ENCODE measurements at regions of chr1 and their contacts with region 1.

Region 1: DNA sequence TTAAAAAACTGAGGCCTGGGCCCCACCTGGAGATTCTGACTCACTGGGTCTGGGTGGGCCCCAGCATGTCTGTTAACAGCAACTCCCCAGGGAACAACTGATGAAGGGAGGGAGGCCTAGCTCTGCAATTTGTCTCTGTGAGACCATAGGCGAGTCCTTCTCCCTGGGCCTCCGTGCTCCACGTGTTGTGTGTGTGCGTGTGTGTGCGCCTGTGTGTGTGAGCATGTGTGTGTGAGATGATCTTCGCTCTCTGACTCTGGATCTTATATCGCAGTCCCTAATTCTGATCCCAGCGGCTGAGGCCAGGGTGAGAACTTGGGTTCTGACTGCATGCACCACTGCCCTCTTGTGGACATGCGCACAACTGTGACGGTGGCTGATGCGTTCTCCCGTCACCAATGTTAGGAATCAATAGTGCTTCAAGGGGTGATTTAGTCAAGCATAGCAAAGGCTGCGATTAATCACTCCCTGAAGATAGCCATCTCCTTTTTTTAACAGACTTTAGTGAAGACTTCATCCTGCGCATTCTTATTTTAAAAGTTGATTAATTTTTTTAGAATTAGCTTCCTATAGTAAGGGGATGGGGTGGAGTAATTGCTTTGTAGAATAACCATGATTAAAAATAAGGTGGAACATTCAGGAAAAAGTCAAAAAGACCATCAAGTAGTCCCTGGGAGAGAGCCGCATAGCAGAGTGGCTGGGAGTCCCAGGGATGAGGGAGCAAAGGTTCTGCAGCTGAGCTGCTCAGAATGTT is 62.4 kb upstream of the USP24 start:
- DNase-seq: peak; percentile 77
- H3K4me3 ChIP-seq: no peak overlapping the region; a peak in 1 of 4 replicates
- H3K27ac ChIP-seq: no peak overlapping the region
- H3K4me1 ChIP-seq: peaks cover 3 to 10% of the 10 kb centered on the region in 2 experiments; a peak in 2 of 4 replicates
- H3K27me3 ChIP-seq: no peaks in the 10 kb centered on the region
- CTCF ChIP-seq: peak; percentile 90
- EP300 ChIP-seq: no peak
- RAD21 ChIP-seq: peak; percentile 95

Region 2: GRCh38 chr1:55071477-55071876 is 206.1 kb before region 1 on chr1:
- CTCF ChIA-PET with region 1: interaction called, 12 read pairs
- POLR2A ChIA-PET with region 1: no interaction called
- DNase-seq: peak; percentile 53
- H3K4me3 ChIP-seq: no peak overlapping the region
- H3K27ac ChIP-seq: no peak overlapping the region; a peak in 1 of 4 replicates
- H3K4me1 ChIP-seq: peaks cover 0 to 8% of the 10 kb centered on the region in 2 experiments; a peak in 1 of 4 replicates
- H3K27me3 ChIP-seq: no peaks in the 10 kb centered on the region
- CTCF ChIP-seq: peak; percentile 61
- EP300 ChIP-seq: no peak
- RAD21 ChIP-seq: peak; percentile 54

Region 3: DNA sequence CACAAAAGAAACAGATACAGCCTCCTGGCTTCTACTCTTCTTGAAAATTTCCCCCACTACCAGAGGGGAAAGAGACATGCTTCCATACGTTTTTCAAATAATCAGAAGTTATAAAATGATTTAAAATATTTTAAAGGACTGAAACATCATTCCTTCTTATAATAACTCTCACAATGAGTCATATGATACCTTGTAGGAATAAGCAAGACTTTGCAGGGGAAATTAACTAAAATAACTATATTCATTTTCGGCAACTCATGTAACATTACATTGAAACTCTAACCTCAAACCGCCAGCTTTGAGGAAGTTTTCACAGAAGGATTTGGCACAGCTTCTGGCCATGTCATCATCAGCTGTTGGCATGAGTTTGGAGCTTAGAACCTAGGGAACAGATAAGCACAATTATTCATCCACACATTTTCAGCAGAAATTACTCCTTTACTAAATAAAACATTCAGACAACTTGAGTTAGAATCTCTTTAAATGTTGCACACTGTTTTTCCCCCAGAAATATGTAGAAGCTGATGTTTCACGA is 148.3 kb before region 1 on chr1:
- CTCF ChIA-PET with region 1: interaction called, 151 read pairs
- POLR2A ChIA-PET with region 1: no interaction called
- DNase-seq: no peak
- H3K4me3 ChIP-seq: no peak overlapping the region
- H3K27ac ChIP-seq: no peak overlapping the region
- H3K4me1 ChIP-seq: no peaks in the 10 kb centered on the region
- H3K27me3 ChIP-seq: no peaks in the 10 kb centered on the region
- CTCF ChIP-seq: no peak
- EP300 ChIP-seq: no peak
- RAD21 ChIP-seq: no peak

Region 4: GRCh38 chr1:55140546-55140983 is 137.0 kb before region 1 on chr1:
- CTCF ChIA-PET with region 1: interaction called, 151 read pairs
- POLR2A ChIA-PET with region 1: no interaction called
- DNase-seq: peak; percentile 55
- H3K4me3 ChIP-seq: peak overlapping the region in 1 of 2 experiments; percentile 14; a peak in 1 of 4 replicates
- H3K27ac ChIP-seq: peak overlapping the region in 1 of 2 experiments; percentile 72; a peak in 2 of 4 replicates
- H3K4me1 ChIP-seq: peaks cover 0 to 3% of the 10 kb centered on the region in 2 experiments; a peak in 1 of 4 replicates
- H3K27me3 ChIP-seq: no peaks in the 10 kb centered on the region
- CTCF ChIP-seq: peak; percentile 89
- EP300 ChIP-seq: no peak
- RAD21 ChIP-seq: peak; percentile 90

Region 5: DNA sequence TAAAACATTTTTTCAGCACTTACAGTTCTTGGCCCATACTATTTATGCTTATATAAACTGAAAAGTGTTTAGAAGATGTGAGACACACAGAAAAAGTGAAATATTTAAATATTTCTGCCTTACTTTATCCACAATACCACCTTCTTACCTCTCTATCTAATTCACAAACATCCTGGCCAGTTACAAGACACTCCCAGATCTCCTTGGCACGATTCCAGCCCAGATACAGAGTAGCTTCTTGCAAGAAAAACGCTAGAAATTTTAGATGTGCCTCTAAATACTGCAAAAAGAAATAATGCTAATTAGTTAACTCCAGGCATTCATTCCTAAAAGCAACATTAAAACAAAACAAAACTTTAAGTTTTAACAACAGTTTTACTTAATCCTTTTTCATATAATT is 130.8 kb before region 1 on chr1:
- CTCF ChIA-PET with region 1: interaction called, 151 read pairs
- POLR2A ChIA-PET with region 1: no interaction called
- DNase-seq: no peak
- H3K4me3 ChIP-seq: no peak overlapping the region
- H3K27ac ChIP-seq: no peak overlapping the region
- H3K4me1 ChIP-seq: no peaks in the 10 kb centered on the region
- H3K27me3 ChIP-seq: no peaks in the 10 kb centered on the region
- CTCF ChIP-seq: no peak
- EP300 ChIP-seq: no peak
- RAD21 ChIP-seq: no peak

Region 6: DNA sequence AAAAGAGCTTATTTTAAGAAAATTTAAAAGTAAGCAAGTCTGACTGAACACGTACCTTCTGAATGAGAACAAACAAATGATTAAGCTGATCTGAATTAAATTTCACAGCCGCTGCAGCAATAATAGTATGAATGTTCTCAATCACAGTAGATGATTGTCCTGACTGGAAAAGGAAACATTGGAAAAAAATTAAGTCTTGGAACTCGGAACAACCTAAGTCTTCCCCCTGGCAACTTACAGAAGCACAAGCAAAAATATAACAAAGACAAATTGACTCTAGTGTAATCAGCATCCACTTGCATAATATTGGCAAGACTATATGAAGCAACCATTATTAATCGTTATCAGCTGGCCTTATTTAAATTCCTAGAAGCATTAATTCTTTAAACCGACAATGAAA is 122.9 kb before region 1 on chr1:
- CTCF ChIA-PET with region 1: interaction called, 22 read pairs
- POLR2A ChIA-PET with region 1: no interaction called
- DNase-seq: no peak
- H3K4me3 ChIP-seq: no peak overlapping the region
- H3K27ac ChIP-seq: no peak overlapping the region
- H3K4me1 ChIP-seq: peaks cover 0 to 2% of the 10 kb centered on the region in 2 experiments; a peak in 1 of 4 replicates
- H3K27me3 ChIP-seq: no peaks in the 10 kb centered on the region
- CTCF ChIP-seq: no peak
- EP300 ChIP-seq: no peak
- RAD21 ChIP-seq: no peak

Region 7: DNA sequence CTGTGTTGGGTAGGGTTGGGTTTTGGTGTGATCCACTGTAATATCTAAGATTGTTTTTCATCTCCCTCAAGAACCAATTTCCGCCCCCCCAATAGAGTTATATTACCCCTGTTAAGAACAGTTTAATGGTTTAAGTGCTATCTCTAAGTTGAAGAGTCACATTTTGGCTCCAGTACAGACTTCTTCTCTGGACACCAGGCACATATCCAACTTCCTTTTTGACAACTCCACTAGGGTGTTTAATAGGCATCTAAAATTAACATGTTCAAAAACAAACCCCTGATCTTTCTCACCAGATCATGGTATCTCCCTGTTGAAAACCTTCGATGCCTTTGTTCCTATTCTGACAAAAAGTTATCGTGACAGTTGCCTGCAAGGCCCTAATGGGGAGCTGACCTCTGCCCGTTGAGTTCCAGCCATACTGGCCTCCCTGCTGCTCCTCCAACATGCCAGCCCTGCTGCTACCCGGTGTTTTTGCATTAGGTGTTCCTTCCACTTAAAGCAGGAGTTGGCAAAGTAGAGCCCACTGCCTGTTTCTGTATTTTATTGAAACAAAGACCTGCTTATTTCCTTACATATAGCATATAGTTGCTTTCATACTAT is 81.0 kb before region 1 on chr1:
- CTCF ChIA-PET with region 1: no interaction called
- POLR2A ChIA-PET with region 1: no interaction called
- DNase-seq: no peak
- H3K4me3 ChIP-seq: no peak overlapping the region
- H3K27ac ChIP-seq: no peak overlapping the region
- H3K4me1 ChIP-seq: peaks cover 0 to 2% of the 10 kb centered on the region in 2 experiments; a peak in 2 of 4 replicates
- H3K27me3 ChIP-seq: no peaks in the 10 kb centered on the region
- CTCF ChIP-seq: no peak
- EP300 ChIP-seq: no peak
- RAD21 ChIP-seq: no peak

Region 8: DNA sequence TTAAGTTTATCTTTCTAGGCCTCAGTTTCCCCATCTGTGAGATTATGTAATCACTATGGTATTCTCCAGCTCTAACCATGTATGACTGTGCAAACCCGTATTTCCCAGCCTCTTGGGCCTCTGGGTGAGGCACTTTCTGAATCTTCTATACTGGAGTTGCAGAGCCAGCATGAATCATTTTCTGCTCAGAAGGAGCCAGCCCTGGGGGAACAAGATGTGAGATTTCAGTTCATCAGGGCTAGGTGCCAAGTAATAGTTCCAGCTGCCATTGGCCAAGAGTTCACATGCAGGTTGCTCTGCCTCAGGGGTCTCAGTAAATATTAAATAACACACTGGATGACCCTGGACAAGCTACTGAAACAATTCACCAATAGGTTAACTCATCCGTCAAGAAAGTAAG is 14.7 kb before region 1 on chr1:
- CTCF ChIA-PET with region 1: interaction called, 21 read pairs
- POLR2A ChIA-PET with region 1: no interaction called
- DNase-seq: no peak
- H3K4me3 ChIP-seq: no peak overlapping the region
- H3K27ac ChIP-seq: no peak overlapping the region
- H3K4me1 ChIP-seq: no peaks in the 10 kb centered on the region
- H3K27me3 ChIP-seq: no peaks in the 10 kb centered on the region
- CTCF ChIP-seq: no peak
- EP300 ChIP-seq: no peak
- RAD21 ChIP-seq: no peak

Region 9: GRCh38 chr1:55420929-55421716 is 143.6 kb after region 1 on chr1:
- CTCF ChIA-PET with region 1: no interaction called
- POLR2A ChIA-PET with region 1: no interaction called
- DNase-seq: no peak
- H3K4me3 ChIP-seq: no peak overlapping the region
- H3K27ac ChIP-seq: no peak overlapping the region; a peak in 1 of 4 replicates
- H3K4me1 ChIP-seq: peaks cover 0 to 5% of the 10 kb centered on the region in 2 experiments; a peak in 1 of 4 replicates
- H3K27me3 ChIP-seq: no peaks in the 10 kb centered on the region
- CTCF ChIP-seq: no peak
- EP300 ChIP-seq: no peak
- RAD21 ChIP-seq: no peak

Region 10: GRCh38 chr1:55536545-55536865 is 259.0 kb after region 1 on chr1:
- CTCF ChIA-PET with region 1: no interaction called
- POLR2A ChIA-PET with region 1: no interaction called
- DNase-seq: no peak
- H3K4me3 ChIP-seq: no peak overlapping the region
- H3K27ac ChIP-seq: no peak overlapping the region; a peak in 1 of 4 replicates
- H3K4me1 ChIP-seq: no peaks in the 10 kb centered on the region; a peak in 1 of 4 replicates
- H3K27me3 ChIP-seq: no peaks in the 10 kb centered on the region
- CTCF ChIP-seq: no peak
- EP300 ChIP-seq: no peak
- RAD21 ChIP-seq: no peak

Measured in SK-N-SH (cell line).